Astrocyte of the cerebellum (primary cell): ENCODE measurements at regions of chr11 and their contacts with region 1.

Region 1: DNA sequence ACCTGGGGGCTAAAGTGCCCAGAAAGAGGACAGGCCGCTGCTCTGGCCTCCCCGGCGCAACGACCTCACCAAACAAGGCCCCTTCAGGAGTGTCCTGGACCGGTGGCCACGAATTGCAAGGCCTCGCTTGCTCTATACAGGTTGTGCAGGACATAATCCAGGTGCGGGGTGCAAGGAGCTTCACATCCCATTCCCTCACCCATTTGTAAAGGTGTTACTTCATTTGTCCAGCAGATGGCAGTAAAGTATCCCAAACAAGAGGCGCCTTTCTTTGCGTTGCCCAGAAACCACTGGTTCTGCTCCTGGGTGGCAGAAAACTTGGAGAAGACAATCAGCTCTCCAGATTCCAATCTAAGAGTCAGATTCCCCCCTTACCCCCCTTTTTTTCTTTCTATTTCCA is 35.9 kb upstream of the PRDM11 start:
- DNase-seq: peak; percentile 74
- H3K4me3 ChIP-seq: no peak overlapping the region
- CTCF ChIP-seq: peak; percentile 70

Region 2: GRCh38 chr11:45278714-45279113 is 168.2 kb after region 1 on chr11:
- in situ Hi-C with region 1: loop called (anchors 5 kb)
- DNase-seq: no peak
- H3K4me3 ChIP-seq: no peak overlapping the region
- CTCF ChIP-seq: no peak